MCF 10A (cell line): ENCODE measurements at regions of chr6 and their contacts with region 1.

Region 1: DNA sequence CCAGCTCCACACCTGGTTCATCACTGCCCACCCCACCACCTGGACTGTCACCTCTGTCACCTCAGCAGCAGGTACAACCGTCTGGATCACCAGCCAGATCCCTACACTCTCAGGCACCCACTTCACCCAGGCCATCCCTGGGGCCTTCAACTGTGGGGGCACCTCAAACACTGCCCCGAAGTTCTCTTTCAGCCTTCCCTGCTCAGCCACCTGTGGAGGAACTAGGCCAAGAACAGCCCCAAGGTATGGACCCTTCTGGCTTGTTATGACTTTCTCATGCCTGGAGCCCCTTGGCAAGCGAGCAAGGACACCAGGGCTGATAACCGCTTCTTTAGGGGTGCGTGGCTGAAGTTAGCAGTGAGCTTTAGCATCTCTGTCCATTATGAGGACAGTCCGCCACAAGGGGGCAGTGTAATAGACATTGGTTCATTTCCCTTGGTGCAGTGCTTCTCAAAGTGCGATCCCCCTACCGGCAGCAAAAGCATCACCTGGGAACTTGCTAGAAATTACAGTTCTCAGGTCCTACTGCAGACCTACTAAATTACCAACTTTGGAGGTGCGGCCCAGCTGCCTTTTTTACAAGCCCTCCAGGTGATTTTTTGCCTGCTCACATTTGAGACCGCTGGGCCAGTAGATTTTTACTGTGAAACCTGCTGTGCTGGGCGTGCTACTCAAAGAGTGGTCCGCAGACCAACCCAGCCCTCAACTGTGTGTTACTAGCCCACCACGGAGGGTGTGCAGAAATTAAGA is 32.5 kb downstream of the PNPLA1 start:
- DNase-seq: peak; percentile 94
- H3K4me3 Mint-ChIP-seq: no peak overlapping the region
- H3K27ac Mint-ChIP-seq: no peak overlapping the region
- H3K4me1 Mint-ChIP-seq: no peaks in the 10 kb centered on the region
- H3K27me3 Mint-ChIP-seq: no peaks in the 10 kb centered on the region
- CTCF ChIP-seq: peak; percentile 85

Region 2: DNA sequence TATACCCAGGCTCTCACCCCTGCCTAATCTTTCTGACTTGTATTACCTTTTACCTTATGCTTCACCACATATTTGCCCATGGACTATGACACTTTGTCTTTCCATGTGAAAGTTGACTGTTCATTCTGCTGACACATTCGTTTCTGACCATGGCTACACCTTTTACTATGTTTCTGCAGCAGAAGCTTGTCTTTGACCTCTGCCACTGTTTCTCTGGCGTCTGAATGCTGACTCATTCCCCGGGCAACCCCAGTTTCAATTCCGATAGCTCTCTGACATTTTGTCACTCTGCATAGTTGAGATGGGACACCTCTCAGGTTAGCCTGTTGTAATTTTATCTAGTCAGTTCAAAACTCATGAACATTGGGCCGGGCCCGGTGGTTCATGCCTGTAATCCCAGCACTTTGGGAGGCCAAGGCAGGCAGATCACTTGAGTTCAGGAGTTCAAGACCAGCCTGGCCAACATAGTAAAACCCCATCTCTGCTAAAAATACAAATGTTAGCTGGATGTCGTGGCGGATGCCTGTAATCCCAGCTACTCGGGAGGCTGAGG is 328.7 kb before region 1 on chr6:
- CTCF ChIA-PET with region 1: no interaction called
- POLR2A ChIA-PET with region 1: no interaction called
- intact Hi-C with region 1: no loop called
- DNase-seq: peak; percentile 41
- H3K4me3 Mint-ChIP-seq: no peak overlapping the region
- H3K27ac Mint-ChIP-seq: no peak overlapping the region
- H3K4me1 Mint-ChIP-seq: peaks cover 5% of the 10 kb centered on the region
- H3K27me3 Mint-ChIP-seq: no peaks in the 10 kb centered on the region
- CTCF ChIP-seq: no peak

Region 3: GRCh38 chr6:36098920-36099647 is 203.3 kb before region 1 on chr6:
- CTCF ChIA-PET with region 1: no interaction called
- POLR2A ChIA-PET with region 1: no interaction called
- intact Hi-C with region 1: no loop called
- DNase-seq: no peak
- H3K4me3 Mint-ChIP-seq: no peak overlapping the region
- H3K27ac Mint-ChIP-seq: no peak overlapping the region
- H3K4me1 Mint-ChIP-seq: peaks cover 6% of the 10 kb centered on the region
- H3K27me3 Mint-ChIP-seq: no peaks in the 10 kb centered on the region
- CTCF ChIP-seq: no peak

Region 4: GRCh38 chr6:36196880-36197548 is 105.4 kb before region 1 on chr6:
- CTCF ChIA-PET with region 1: no interaction called
- POLR2A ChIA-PET with region 1: no interaction called
- intact Hi-C with region 1: loop called (anchors 1 kb)
- DNase-seq: peak; percentile 96
- H3K4me3 Mint-ChIP-seq: peak overlapping the region; percentile 87
- H3K27ac Mint-ChIP-seq: peak overlapping the region; percentile 27
- H3K4me1 Mint-ChIP-seq: peaks cover 13% of the 10 kb centered on the region
- H3K27me3 Mint-ChIP-seq: peaks cover 10% of the 10 kb centered on the region
- CTCF ChIP-seq: no peak

Region 5: GRCh38 chr6:36224904-36225461 is 77.4 kb before region 1 on chr6:
- CTCF ChIA-PET with region 1: no interaction called
- POLR2A ChIA-PET with region 1: no interaction called
- intact Hi-C with region 1: no loop called
- DNase-seq: peak; percentile 44
- H3K4me3 Mint-ChIP-seq: no peak overlapping the region
- H3K27ac Mint-ChIP-seq: no peak overlapping the region
- H3K4me1 Mint-ChIP-seq: peaks cover 7% of the 10 kb centered on the region
- H3K27me3 Mint-ChIP-seq: no peaks in the 10 kb centered on the region
- CTCF ChIP-seq: no peak

Region 6: DNA sequence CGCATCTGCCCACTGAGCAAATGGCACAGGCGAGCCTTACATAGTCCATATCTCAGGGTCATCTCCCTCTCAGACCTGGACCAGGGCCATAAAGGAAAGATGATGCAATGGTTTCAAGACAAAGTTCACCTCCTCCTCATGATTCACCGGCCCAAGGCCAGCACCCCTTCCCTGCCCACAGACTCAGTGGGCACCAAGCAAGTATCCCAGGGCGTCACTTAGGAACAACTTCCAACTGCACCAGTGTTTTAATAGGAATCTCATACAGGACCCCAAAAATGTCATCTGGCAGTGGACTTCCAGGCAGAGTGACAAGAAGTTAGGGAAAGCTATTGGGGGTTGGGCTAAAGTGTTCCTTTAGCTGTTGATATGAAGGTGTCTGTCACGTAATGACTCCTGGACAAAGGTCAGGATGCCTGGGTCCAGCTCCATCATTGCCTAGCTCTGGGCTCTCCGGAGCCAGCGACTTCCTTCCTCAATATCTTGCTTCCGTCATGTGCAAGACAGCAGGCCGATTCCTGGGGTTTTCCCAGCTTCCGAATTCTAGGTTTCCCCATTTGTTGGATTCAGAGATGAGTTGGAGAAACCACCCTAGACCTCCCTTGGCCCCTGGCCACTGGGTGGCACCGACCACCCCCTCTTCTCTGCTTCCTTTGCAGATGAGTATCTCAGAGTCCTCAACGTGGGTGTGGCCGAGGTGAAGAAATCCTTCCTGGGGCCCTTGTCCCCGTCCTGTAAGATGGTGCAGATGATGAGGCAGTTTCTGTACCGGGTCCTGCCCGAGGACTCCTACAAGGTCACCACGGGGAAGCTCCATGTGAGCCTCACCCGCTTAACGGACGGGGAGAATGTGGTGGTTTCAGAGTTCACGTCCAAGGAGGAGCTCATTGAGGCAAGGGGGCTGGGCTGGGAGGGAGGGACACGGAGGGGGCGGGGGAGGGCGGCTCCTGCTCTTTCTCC is 11.5 kb before region 1 on chr6:
- CTCF ChIA-PET with region 1: interaction called, 16 read pairs
- POLR2A ChIA-PET with region 1: interaction called, 10 read pairs
- intact Hi-C with region 1: no loop called
- DNase-seq: peak; percentile 84
- H3K4me3 Mint-ChIP-seq: no peak overlapping the region
- H3K27ac Mint-ChIP-seq: no peak overlapping the region
- H3K4me1 Mint-ChIP-seq: peaks cover 20% of the 10 kb centered on the region
- H3K27me3 Mint-ChIP-seq: peaks cover 5% of the 10 kb centered on the region
- CTCF ChIP-seq: no peak

Region 7: GRCh38 chr6:36319436-36319762 is 17.0 kb after region 1 on chr6:
- CTCF ChIA-PET with region 1: interaction called, 10 read pairs
- POLR2A ChIA-PET with region 1: no interaction called
- intact Hi-C with region 1: no loop called
- DNase-seq: no peak
- H3K4me3 Mint-ChIP-seq: no peak overlapping the region
- H3K27ac Mint-ChIP-seq: no peak overlapping the region
- H3K4me1 Mint-ChIP-seq: no peaks in the 10 kb centered on the region
- H3K27me3 Mint-ChIP-seq: peaks cover 18% of the 10 kb centered on the region
- CTCF ChIP-seq: no peak

Region 8: GRCh38 chr6:36326356-36326995 is 24.1 kb after region 1 on chr6:
- CTCF ChIA-PET with region 1: interaction called, 12 read pairs
- POLR2A ChIA-PET with region 1: no interaction called
- intact Hi-C with region 1: no loop called
- DNase-seq: no peak
- H3K4me3 Mint-ChIP-seq: no peak overlapping the region
- H3K27ac Mint-ChIP-seq: no peak overlapping the region
- H3K4me1 Mint-ChIP-seq: no peaks in the 10 kb centered on the region
- H3K27me3 Mint-ChIP-seq: peaks cover 37% of the 10 kb centered on the region
- CTCF ChIP-seq: no peak

Region 9: DNA sequence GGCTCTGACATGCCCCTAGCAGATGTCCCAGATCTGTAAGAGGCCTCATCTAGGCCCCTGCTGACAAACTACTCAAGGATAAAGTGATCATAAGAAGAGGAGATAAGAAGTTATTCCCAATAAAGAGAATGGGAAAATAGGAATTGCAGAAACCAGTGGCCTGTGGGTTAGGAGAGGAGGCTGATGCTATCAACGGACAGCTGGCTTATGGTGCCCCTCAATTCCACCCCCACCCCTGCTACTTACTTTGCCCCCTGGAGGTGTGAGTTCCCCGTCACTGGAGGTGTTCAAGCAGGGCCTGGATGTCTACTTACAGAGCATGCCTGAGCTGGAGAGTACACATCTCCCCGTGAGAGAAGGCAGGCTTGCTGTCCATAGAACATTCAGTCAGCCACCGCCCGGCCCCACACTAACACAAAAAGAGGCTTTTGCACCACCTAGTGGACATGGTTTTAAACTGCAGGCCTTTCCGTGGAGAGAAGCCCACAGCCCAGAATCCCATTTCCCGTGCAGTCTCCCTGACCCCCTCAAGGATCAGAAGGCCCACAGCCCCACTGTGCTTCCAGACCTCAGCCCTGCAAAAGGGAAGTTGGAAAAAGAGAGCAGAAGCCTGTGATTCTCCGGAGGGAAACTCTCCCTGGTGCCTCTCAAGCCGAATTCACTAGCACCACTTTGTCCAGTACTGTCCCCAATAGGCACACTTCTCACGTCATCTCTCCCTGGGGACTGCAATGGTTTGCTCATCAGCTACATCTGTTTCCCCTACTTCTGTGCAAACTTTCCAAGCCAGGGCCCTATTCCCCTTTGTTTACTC is 58.0 kb after region 1 on chr6:
- CTCF ChIA-PET with region 1: interaction called, 9 read pairs
- POLR2A ChIA-PET with region 1: no interaction called
- intact Hi-C with region 1: loop called (anchors 1 kb)
- DNase-seq: peak; percentile 84
- H3K4me3 Mint-ChIP-seq: no peak overlapping the region
- H3K27ac Mint-ChIP-seq: no peak overlapping the region
- H3K4me1 Mint-ChIP-seq: no peaks in the 10 kb centered on the region
- H3K27me3 Mint-ChIP-seq: no peaks in the 10 kb centered on the region
- CTCF ChIP-seq: peak; percentile 86